CD14-positive monocyte (primary cell): ENCODE measurements at regions of chr6 and their contacts with region 1.

Region 1: GRCh38 chr6:26003102-26003694 is 40.6 kb downstream of the TRIM38 start:
- DNase-seq: peak; percentile 30 to 57 (median 53)
- H3K4me3 ChIP-seq: no peak overlapping the region
- H3K4me3 Mint-ChIP-seq: no peak overlapping the region
- H3K27ac ChIP-seq: no peak overlapping the region
- H3K27ac Mint-ChIP-seq: no peak overlapping the region
- H3K4me1 ChIP-seq: no peaks in the 10 kb centered on the region
- H3K4me1 Mint-ChIP-seq: peaks cover 24% of the 10 kb centered on the region
- H3K27me3 ChIP-seq: no peaks in the 10 kb centered on the region
- H3K27me3 Mint-ChIP-seq: peaks cover 0 to 4% (median 0%) of the 10 kb centered on the region in 3 donors
- CTCF ChIP-seq: peak; percentile 95

Region 2: DNA sequence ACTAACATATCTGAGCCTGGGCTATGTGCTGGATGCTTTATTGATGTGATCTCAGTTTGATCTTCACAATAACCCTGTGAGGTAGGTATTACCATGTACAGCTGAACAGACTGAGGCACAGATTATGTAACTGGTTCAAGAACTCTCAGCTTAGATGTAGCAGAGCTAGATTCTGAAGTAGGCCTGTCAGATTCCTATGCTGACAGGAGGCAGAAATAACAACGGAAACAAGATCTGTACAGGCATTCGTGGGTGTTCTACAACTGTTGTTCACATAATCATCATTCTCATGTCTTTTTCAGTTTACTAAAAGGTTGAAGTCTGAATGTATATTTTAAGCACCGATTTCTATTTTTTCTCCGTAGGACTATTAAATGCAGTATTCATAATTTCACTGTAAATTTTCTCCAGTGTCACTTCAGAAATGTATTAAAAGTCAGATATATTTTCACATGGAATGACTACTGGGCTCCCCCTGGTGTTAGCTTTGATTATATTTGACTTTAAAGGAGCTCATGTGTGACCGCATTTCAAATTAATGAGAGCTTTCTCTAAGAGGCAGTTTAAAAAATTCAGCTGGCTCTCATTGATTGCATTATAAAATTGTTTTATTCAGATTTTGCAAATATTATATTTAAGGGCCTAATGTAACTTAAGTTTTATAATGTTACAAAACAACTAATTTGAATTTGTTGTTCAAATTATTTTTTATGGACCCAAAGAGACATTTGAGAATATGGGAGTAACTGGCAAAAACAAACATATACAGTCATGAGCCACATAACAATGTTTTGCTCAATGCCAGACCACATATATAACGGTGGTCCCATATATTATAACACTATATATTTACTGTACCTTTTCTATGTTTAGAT is 285.1 kb before region 1 on chr6:
- intact Hi-C with region 1: loop called in 1 of 2 experiments (anchors 5 kb)
- DNase-seq: no peak
- H3K4me3 ChIP-seq: no peak overlapping the region
- H3K4me3 Mint-ChIP-seq: no peak overlapping the region
- H3K27ac ChIP-seq: no peak overlapping the region
- H3K27ac Mint-ChIP-seq: no peak overlapping the region
- H3K4me1 ChIP-seq: peaks cover 10 to 11% of the 10 kb centered on the region in 2 donors
- H3K4me1 Mint-ChIP-seq: peaks cover 15% of the 10 kb centered on the region
- H3K27me3 ChIP-seq: no peaks in the 10 kb centered on the region
- H3K27me3 Mint-ChIP-seq: peaks cover 0 to 2% (median 0%) of the 10 kb centered on the region in 3 donors
- CTCF ChIP-seq: peak; percentile 57